ENCODE measurements at regions of chr12 and their contacts with region 1.

Region 1: GRCh38 chr12:751192-751998 is 984 bp upstream of the WNK1 start:
- DNase-seq: peak; percentile 95
- H3K4me3 Mint-ChIP-seq: no peak overlapping the region
- H3K27ac Mint-ChIP-seq: no peak overlapping the region
- H3K4me1 Mint-ChIP-seq: peaks cover 11% of the 10 kb centered on the region
- H3K27me3 Mint-ChIP-seq: no peaks in the 10 kb centered on the region
- CTCF ChIP-seq: peak; percentile 49

Region 2: DNA sequence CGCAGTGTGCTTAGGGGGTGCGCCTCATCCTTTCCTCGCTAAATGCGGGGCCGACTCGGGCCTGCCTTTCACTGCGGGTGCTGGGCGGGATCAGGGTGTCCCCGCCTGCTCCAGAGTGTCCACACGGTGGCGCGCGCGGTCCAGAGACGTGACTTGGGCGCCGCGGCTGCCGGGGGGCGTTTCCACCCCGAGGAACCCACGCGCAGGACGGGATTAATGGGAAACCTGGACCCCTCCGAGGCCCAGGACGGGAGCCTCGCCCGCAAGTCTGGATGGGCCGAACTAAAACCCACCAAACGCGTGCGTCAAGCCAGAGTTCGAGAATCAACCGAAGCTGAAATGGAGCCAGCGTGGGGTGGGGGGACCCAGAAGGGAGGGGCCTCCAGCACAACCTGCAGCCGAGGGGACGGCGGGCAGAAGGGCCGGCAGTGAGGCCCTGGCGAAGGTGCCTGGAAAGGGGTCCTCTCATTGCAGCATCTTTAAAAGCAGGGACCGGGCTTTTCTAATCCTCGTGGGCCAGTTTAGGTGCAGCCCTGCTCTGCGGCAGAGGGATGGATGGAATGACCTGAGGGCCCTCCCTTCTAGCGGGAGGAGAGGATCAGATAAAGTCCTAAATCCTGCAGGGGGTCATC is 181.5 kb before region 1 on chr12:
- CTCF ChIA-PET with region 1: interaction called, 100 read pairs
- POLR2A ChIA-PET with region 1: interaction called, 336 read pairs
- intact Hi-C with region 1: loop called (anchors 1 kb)
- DNase-seq: peak; percentile 86
- H3K4me3 Mint-ChIP-seq: peak overlapping the region; percentile 85
- H3K27ac Mint-ChIP-seq: peak overlapping the region; percentile 90
- H3K4me1 Mint-ChIP-seq: peaks cover 23% of the 10 kb centered on the region
- H3K27me3 Mint-ChIP-seq: no peaks in the 10 kb centered on the region
- CTCF ChIP-seq: peak; percentile 90

Region 3: GRCh38 chr12:630656-631632 is 120.5 kb before region 1 on chr12:
- CTCF ChIA-PET with region 1: interaction called, 3 read pairs
- POLR2A ChIA-PET with region 1: interaction called, 27 read pairs
- intact Hi-C with region 1: loop called (anchors 5 kb)
- DNase-seq: no peak
- H3K4me3 Mint-ChIP-seq: no peak overlapping the region
- H3K27ac Mint-ChIP-seq: peak overlapping the region; percentile 89
- H3K4me1 Mint-ChIP-seq: peaks cover 15% of the 10 kb centered on the region
- H3K27me3 Mint-ChIP-seq: no peaks in the 10 kb centered on the region
- CTCF ChIP-seq: no peak

Region 4: GRCh38 chr12:737122-737739 is 14.2 kb before region 1 on chr12:
- CTCF ChIA-PET with region 1: interaction called, 9 read pairs
- POLR2A ChIA-PET with region 1: interaction called, 11 read pairs
- intact Hi-C with region 1: no loop called
- DNase-seq: no peak
- H3K4me3 Mint-ChIP-seq: no peak overlapping the region
- H3K27ac Mint-ChIP-seq: no peak overlapping the region
- H3K4me1 Mint-ChIP-seq: no peaks in the 10 kb centered on the region
- H3K27me3 Mint-ChIP-seq: no peaks in the 10 kb centered on the region
- CTCF ChIP-seq: no peak

Region 5: DNA sequence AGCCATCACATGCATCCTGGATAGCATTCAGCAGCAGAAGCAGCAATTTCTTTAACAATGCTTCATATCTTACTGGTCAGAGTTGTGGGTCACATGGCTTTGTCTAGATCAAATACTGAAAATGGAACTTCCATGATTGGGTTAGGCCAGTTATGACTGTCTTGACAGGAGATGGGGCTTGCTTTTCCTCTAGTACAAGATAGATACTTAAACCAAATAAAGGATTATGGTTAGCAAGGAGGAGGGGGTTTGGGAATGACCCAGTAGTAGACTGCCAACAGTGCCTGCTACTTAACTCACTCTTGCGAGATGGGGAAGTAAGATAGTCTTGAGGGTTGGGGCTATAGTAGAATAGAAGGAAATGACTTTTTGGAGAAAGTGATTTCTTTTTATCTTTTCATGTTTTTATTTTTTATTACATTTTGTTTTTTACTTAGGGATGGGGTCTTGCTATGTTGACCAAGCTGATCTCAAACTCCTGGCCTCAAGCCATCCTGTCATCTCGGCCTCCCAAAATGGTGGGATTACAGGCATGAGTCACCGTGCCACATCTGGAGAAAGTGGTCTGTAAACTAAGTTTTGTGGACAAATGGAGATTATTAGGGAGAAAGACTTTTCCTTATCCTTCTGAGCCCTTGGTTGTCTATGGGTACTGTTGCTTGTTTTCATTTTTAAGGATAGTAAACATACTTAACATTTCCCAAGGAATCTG is 38.6 kb after region 1 on chr12:
- CTCF ChIA-PET with region 1: interaction called, 4 read pairs
- POLR2A ChIA-PET with region 1: interaction called, 11 read pairs
- intact Hi-C with region 1: no loop called
- DNase-seq: no peak
- H3K4me3 Mint-ChIP-seq: no peak overlapping the region
- H3K27ac Mint-ChIP-seq: peak overlapping the region; percentile 74
- H3K4me1 Mint-ChIP-seq: peaks cover 59% of the 10 kb centered on the region
- H3K27me3 Mint-ChIP-seq: no peaks in the 10 kb centered on the region
- CTCF ChIP-seq: no peak

Region 6: GRCh38 chr12:857611-858010 is 106.2 kb after region 1 on chr12:
- CTCF ChIA-PET with region 1: interaction called, 4 read pairs
- POLR2A ChIA-PET with region 1: interaction called, 16 read pairs
- intact Hi-C with region 1: no loop called
- DNase-seq: peak; percentile 88
- H3K4me3 Mint-ChIP-seq: peak overlapping the region; percentile 47
- H3K27ac Mint-ChIP-seq: peak overlapping the region; percentile 92
- H3K4me1 Mint-ChIP-seq: peaks cover 24% of the 10 kb centered on the region
- H3K27me3 Mint-ChIP-seq: no peaks in the 10 kb centered on the region
- CTCF ChIP-seq: no peak

Region 7: DNA sequence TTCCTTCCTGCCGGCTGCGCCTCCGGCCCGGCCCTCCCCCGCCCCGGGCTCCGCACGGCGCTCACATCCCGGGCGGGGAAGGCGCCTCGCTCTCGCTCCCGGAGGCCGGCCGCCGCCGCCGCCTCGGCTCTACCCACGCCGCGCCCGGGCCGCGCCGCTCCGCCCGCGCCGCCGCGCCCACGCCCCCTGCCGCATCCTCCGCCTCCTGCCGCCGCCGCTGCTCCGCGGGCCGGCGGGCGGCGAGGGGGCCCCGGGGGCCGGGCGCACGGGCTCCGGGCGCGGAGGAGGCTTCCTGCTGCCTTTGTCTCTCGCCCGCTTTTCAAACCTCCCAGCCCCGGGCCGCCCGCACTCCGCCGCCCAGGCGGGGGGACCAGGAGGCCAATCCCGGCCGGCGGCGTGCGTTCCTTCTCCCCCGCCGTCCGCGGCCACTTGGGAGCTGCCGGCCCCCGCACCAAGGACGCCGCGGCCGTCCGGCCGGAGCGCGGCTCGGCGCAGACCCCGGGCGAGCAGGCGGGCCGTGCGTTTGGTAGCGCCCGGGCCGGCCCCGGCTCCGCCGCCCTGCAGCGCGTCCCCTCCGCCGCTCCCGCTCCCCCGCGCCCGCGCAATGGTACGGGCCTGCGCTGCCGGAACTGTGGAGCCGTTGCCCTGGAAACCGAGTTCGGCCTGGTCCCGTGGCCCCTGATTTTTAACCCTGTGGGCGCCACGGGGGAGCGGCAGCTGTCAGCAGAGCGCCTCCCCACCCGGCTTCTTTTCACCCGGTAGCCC is 843.0 kb after region 1 on chr12 and contains the start of gene FBXL14:
- CTCF ChIA-PET with region 1: no interaction called
- POLR2A ChIA-PET with region 1: interaction called, 3 read pairs
- intact Hi-C with region 1: loop called (anchors 5 kb)
- DNase-seq: peak; percentile 70
- H3K4me3 Mint-ChIP-seq: peak within 1 kb of the TSS; percentile 81
- H3K27ac Mint-ChIP-seq: peak within 1 kb of the TSS; percentile 76
- H3K4me1 Mint-ChIP-seq: peaks cover 36% of the 10 kb centered on the region
- H3K27me3 Mint-ChIP-seq: no peaks in the 10 kb centered on the region
- CTCF ChIP-seq: no peak
- total RNA-seq, gene FBXL14: 9.4 and 10.1 TPM in 2 replicates

Measured in MCF 10A (cell line).